ENCODE measurements at regions of chr7 and their contacts with region 1.

Region 1: DNA sequence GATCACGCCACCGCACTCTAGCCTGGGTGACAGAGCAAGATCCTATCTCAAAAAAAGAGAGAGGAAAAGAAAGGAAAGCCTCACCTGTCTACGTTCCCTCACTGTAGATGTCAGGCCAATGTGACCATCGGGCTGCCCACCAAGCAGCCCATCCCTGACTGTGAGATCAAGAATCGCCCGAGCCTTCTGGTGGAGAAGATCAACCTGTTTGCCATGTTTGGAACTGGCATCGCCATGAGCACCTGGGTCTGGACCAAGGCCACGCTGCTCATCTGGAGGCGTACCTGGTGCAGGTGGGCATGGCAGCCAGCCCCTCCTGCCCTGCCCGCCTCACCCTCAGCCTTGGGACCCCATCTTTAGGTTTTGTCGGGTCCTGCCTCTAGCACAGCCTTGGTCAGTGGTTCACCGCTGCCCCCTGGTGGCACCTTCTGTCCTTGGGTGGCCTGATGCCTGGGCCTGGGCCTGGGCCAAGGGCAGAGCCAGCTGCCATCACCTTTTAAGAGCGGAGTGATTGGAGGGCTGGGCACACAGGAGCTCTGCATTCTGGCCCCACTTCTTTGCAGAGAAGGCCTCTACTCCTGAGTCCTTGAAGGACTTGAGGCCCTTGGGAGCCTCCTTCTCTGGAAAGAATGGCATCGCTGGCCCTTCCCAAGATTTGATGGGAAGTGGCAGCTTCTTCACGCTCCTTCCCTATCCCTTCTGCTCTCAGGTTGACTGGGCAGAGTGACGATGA is 14.4 kb upstream of the AHCYL2 start:
- DNase-seq: peak; percentile 44
- ATAC-seq: peak; percentile 94
- H3K4me3 ChIP-seq: no peak overlapping the region
- H3K27ac ChIP-seq: no peak overlapping the region
- H3K4me1 ChIP-seq: no peaks in the 10 kb centered on the region
- H3K27me3 ChIP-seq: no peaks in the 10 kb centered on the region
- CTCF ChIP-seq: peak; percentile 81
- POLR2A ChIP-seq: no peak
- RAD21 ChIP-seq: peak; percentile 82

Region 2: DNA sequence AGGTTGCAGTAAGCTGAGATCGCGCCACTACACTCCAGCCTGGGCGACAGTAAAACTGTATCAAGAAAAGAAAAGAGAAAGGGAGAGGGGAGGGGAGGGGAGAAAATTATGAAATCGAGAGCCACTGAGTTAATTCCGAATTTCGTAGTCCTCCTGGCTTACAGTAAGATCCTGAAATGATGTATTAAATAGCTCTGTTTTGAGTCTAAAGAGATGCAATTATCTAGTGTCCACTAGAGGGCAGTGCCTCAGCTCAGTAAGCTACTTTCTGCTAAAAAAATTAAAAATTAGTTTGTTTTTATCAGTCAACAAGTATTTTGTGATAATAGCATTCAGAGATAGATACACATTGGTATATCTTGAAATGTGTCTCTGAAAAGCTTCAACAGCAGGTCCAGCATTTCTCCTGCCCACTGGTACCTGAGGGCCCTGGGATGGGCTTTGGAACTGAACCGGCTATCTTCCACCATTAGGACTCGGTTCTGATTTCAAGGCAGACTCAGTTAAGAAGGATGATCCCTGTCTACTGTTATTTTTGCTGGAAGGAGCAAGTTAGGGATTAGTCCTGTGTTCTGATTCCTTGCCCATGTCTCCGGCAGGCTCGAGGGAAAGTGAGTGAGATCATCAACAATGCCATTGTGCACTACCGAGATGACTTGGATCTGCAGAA is 46.4 kb before region 1 on chr7:
- CTCF ChIA-PET with region 1: interaction called, 6 read pairs
- POLR2A ChIA-PET with region 1: no interaction called
- dilution Hi-C with region 1: no loop called
- in situ Hi-C with region 1: loop called (anchors 5 kb)
- intact Hi-C with region 1: loop called (anchors 1 kb)
- DNase-seq: peak; percentile 76
- ATAC-seq: peak; percentile 81
- H3K4me3 ChIP-seq: no peak overlapping the region
- H3K27ac ChIP-seq: no peak overlapping the region
- H3K4me1 ChIP-seq: no peaks in the 10 kb centered on the region
- H3K27me3 ChIP-seq: peaks cover 61% of the 10 kb centered on the region
- CTCF ChIP-seq: peak; percentile 88
- POLR2A ChIP-seq: no peak
- RAD21 ChIP-seq: peak; percentile 67

Region 3: DNA sequence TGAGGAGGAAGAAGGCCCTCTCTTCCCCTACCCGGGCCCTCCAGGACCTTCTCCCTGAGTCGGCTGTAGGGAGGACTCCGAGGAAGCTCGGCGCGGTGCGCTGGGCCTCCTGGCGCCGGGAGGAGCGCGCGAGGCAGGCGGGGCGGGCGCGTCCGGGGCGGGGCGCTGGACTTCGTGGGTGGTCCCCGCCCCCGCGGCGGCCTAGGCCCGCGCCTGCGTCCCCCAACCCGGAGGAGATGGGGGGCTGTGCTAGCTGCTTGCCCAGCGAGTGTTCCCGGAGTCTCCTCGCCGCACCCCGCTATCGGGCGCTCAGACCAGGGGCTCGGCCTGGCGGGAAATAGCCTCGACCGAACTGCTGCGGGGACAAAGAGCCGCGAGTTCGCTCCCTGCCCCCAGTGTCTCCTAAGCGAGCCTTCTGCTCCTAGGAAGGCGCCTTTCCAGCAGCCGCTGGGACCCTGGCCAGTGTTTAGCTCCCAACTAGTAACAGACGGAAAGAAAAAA is 41.2 kb before region 1 on chr7:
- CTCF ChIA-PET with region 1: interaction called, 6 read pairs
- POLR2A ChIA-PET with region 1: no interaction called
- dilution Hi-C with region 1: no loop called
- in situ Hi-C with region 1: loop called (anchors 5 kb)
- intact Hi-C with region 1: loop called (anchors 1 kb)
- DNase-seq: no peak
- ATAC-seq: peak; percentile 91
- H3K4me3 ChIP-seq: peak overlapping the region; percentile 45
- H3K27ac ChIP-seq: no peak overlapping the region; the same call in 1 of the 2 replicates
- H3K4me1 ChIP-seq: no peaks in the 10 kb centered on the region; the same call in 1 of the 2 replicates
- H3K27me3 ChIP-seq: peaks cover 42% of the 10 kb centered on the region
- CTCF ChIP-seq: no peak
- POLR2A ChIP-seq: no peak
- RAD21 ChIP-seq: no peak